K562 (cell line): ENCODE measurements at regions of chr7 and their contacts with region 1.

Region 1: GRCh38 chr7:77759294-77759889 is 38.8 kb downstream of the TMEM60 start:
- DNase-seq: peak; percentile 46 to 87 (median 62)
- ATAC-seq: peak; percentile 90
- H3K4me3 ChIP-seq: no peak overlapping the region
- H3K27ac ChIP-seq: no peak overlapping the region
- H3K4me1 ChIP-seq: peaks cover 0 to 3% of the 10 kb centered on the region in 2 experiments; a peak in 1 of 5 replicates
- H3K27me3 ChIP-seq: no peaks in the 10 kb centered on the region
- CTCF ChIP-seq: peak; percentile 70 to 91 (median 77)
- EP300 ChIP-seq: no peak
- POLR2A ChIP-seq: no peak
- RAD21 ChIP-seq: peak; percentile 91 to 93

Region 2: GRCh38 chr7:77439572-77439971 is 319.8 kb before region 1 on chr7:
- CTCF ChIA-PET with region 1: no interaction called
- POLR2A ChIA-PET with region 1: no interaction called
- in situ Hi-C with region 1: no loop called
- intact Hi-C with region 1: loop called (anchors 10 kb)
- DNase-seq: peak in 1 of 4 experiments; percentile 25
- ATAC-seq: peak; percentile 69
- H3K4me3 ChIP-seq: no peak overlapping the region
- H3K27ac ChIP-seq: no peak overlapping the region
- H3K4me1 ChIP-seq: no peaks in the 10 kb centered on the region
- H3K27me3 ChIP-seq: peaks cover 21 to 26% of the 10 kb centered on the region in 2 experiments; a peak in 4 of 5 replicates
- CTCF ChIP-seq: peak; percentile 17 to 47 (median 45); a peak in 5 of 6 replicates
- EP300 ChIP-seq: no peak
- POLR2A ChIP-seq: no peak
- RAD21 ChIP-seq: peak; percentile 45 to 62

Region 3: DNA sequence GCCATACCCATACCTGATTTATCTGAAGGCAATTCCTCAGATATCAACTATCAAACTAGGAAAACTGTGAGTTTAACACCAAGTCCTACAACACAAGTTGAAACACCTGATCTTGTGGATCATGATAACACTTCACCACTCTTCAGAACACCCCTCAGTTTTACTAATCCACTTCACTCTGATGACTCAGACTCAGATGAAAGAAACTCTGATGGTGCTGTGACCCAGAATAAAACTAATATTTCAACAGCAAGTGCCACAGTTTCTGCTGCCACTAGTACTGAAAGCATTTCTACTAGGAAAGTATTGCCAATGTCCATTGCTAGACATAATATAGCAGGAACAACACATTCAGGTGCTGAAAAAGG is 132.1 kb before region 1 on chr7:
- CTCF ChIA-PET with region 1: no interaction called
- POLR2A ChIA-PET with region 1: no interaction called
- in situ Hi-C with region 1: no loop called
- intact Hi-C with region 1: no loop called
- DNase-seq: no peak
- ATAC-seq: peak; percentile 38
- H3K4me3 ChIP-seq: no peak overlapping the region
- H3K27ac ChIP-seq: no peak overlapping the region; the same call in 2 of the 3 replicates
- H3K4me1 ChIP-seq: no peaks in the 10 kb centered on the region
- H3K27me3 ChIP-seq: no peaks in the 10 kb centered on the region
- CTCF ChIP-seq: no peak
- EP300 ChIP-seq: no peak
- POLR2A ChIP-seq: no peak
- RAD21 ChIP-seq: no peak

Region 4: DNA sequence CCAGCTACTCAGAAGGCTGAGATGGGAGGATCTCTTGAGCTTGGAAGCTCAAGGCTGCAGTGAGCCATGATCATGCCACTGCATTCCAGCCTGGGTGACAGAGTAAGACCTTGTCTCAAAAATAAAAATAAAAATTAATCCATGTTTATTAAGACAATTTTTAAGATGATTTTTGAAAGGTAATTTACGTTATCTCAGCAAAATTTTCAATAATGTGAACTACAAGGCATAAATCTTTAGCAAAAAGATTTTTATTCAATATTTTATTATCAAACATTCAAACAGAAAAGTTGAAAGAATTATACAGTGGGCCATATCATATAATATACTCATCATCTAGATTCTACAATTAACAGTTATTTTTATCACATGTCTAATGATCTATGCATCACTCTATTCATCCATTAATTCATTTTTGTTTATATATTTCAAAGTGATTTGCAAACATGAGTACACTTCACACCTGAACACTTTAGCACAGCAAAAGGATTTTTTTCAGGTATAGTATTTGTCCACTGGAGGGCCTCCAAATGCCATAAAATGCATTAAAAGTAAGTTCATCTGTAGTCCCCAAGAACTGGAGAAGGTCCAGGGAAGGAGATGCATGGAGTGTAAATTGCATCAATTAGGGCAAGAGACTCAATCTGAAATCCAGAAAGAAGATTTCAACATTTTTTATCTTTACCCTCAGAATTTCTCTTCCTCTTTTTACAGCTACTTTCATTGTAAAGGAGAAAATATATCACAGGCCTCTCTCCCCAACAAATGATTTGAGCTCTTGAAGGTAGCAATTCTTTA is 101.8 kb before region 1 on chr7:
- CTCF ChIA-PET with region 1: interaction called, 32 read pairs
- POLR2A ChIA-PET with region 1: interaction called, 3 read pairs
- in situ Hi-C with region 1: loop called (anchors 5 kb)
- intact Hi-C with region 1: loop called (anchors 1 kb)
- DNase-seq: peak; percentile 40 to 68 (median 46)
- ATAC-seq: peak; percentile 94
- H3K4me3 ChIP-seq: no peak overlapping the region
- H3K27ac ChIP-seq: no peak overlapping the region
- H3K4me1 ChIP-seq: no peaks in the 10 kb centered on the region
- H3K27me3 ChIP-seq: no peaks in the 10 kb centered on the region
- CTCF ChIP-seq: peak; percentile 62 to 86 (median 66); a peak in 5 of 6 replicates
- EP300 ChIP-seq: no peak
- POLR2A ChIP-seq: no peak
- RAD21 ChIP-seq: peak; percentile 94 to 95

Region 5: GRCh38 chr7:77696198-77697028 is 63.0 kb before region 1 on chr7 and contains the start of gene RSBN1L:
- CTCF ChIA-PET with region 1: interaction called, 3 read pairs
- POLR2A ChIA-PET with region 1: interaction called, 3 read pairs
- in situ Hi-C with region 1: no loop called
- intact Hi-C with region 1: loop called (anchors 2 kb)
- DNase-seq: peak; percentile 98 to 100 (median 98)
- ATAC-seq: peak; percentile 93
- H3K4me3 ChIP-seq: peak within 1 kb of the TSS; percentile 93
- H3K27ac ChIP-seq: peak within 1 kb of the TSS; percentile 88
- H3K4me1 ChIP-seq: peaks cover 17 to 19% of the 10 kb centered on the region in 2 experiments; a peak in 4 of 5 replicates
- H3K27me3 ChIP-seq: no peaks in the 10 kb centered on the region
- CTCF ChIP-seq: peak; percentile 40 to 44 (median 43); a peak in 3 of 6 replicates
- EP300 ChIP-seq: no peak
- POLR2A ChIP-seq: peak; percentile 95
- RAD21 ChIP-seq: no peak
- polyA plus RNA-seq, gene RSBN1L: 6.2 to 8.3 TPM

Region 6: GRCh38 chr7:77830649-77831355 is 71.4 kb after region 1 on chr7:
- CTCF ChIA-PET with region 1: no interaction called
- POLR2A ChIA-PET with region 1: no interaction called
- in situ Hi-C with region 1: no loop called
- intact Hi-C with region 1: no loop called
- DNase-seq: peak in 1 of 4 experiments; percentile 62
- ATAC-seq: peak; percentile 55
- H3K4me3 ChIP-seq: no peak overlapping the region
- H3K27ac ChIP-seq: peak overlapping the region; percentile 58; the same call in 2 of the 3 replicates
- H3K4me1 ChIP-seq: peaks cover 4 to 51% of the 10 kb centered on the region in 2 experiments; a peak in 4 of 5 replicates
- H3K27me3 ChIP-seq: no peaks in the 10 kb centered on the region
- CTCF ChIP-seq: no peak
- EP300 ChIP-seq: no peak
- POLR2A ChIP-seq: no peak
- RAD21 ChIP-seq: no peak

Region 7: GRCh38 chr7:77910124-77910523 is 150.7 kb after region 1 on chr7:
- CTCF ChIA-PET with region 1: no interaction called
- POLR2A ChIA-PET with region 1: no interaction called
- in situ Hi-C with region 1: no loop called
- intact Hi-C with region 1: no loop called
- DNase-seq: no peak
- ATAC-seq: no peak
- H3K4me3 ChIP-seq: no peak overlapping the region
- H3K27ac ChIP-seq: no peak overlapping the region
- H3K4me1 ChIP-seq: peaks cover 25 to 29% of the 10 kb centered on the region in 2 experiments
- H3K27me3 ChIP-seq: no peaks in the 10 kb centered on the region
- CTCF ChIP-seq: peak in 2 of 3 experiments; percentile 12 to 32; a peak in 2 of 6 replicates
- EP300 ChIP-seq: no peak
- POLR2A ChIP-seq: no peak
- RAD21 ChIP-seq: no peak

Region 8: GRCh38 chr7:77940647-77941046 is 181.3 kb after region 1 on chr7:
- CTCF ChIA-PET with region 1: no interaction called
- POLR2A ChIA-PET with region 1: no interaction called
- in situ Hi-C with region 1: no loop called
- intact Hi-C with region 1: loop called (anchors 2 kb)
- DNase-seq: peak; percentile 20 to 63 (median 38)
- ATAC-seq: peak; percentile 37
- H3K4me3 ChIP-seq: no peak overlapping the region
- H3K27ac ChIP-seq: no peak overlapping the region
- H3K4me1 ChIP-seq: peaks cover 12 to 20% of the 10 kb centered on the region in 2 experiments
- H3K27me3 ChIP-seq: no peaks in the 10 kb centered on the region
- CTCF ChIP-seq: peak; percentile 49 to 90 (median 57); a peak in 5 of 6 replicates
- EP300 ChIP-seq: no peak; the same call in 1 of the 2 replicates
- POLR2A ChIP-seq: no peak
- RAD21 ChIP-seq: peak; percentile 91 to 95

Region 9: GRCh38 chr7:78018641-78019446 is 259.5 kb after region 1 on chr7:
- CTCF ChIA-PET with region 1: no interaction called
- POLR2A ChIA-PET with region 1: no interaction called
- in situ Hi-C with region 1: no loop called
- intact Hi-C with region 1: no loop called
- DNase-seq: peak in 2 of 4 experiments; percentile 37 to 53
- ATAC-seq: peak; percentile 3
- H3K4me3 ChIP-seq: peak overlapping the region; percentile 32
- H3K27ac ChIP-seq: peak overlapping the region; percentile 69; the same call in 2 of the 3 replicates
- H3K4me1 ChIP-seq: peaks cover 18 to 26% of the 10 kb centered on the region in 2 experiments
- H3K27me3 ChIP-seq: peaks cover 4% of the 10 kb centered on the region in 2 experiments; a peak in 3 of 5 replicates
- CTCF ChIP-seq: no peak
- EP300 ChIP-seq: no peak
- POLR2A ChIP-seq: no peak
- RAD21 ChIP-seq: 0 out of 4 replicates have a peak, but pooled peaks of 1 of the 2 experiments have one; percentile 6